Dorsolateral prefrontal cortex (tissue), 120 donors: ENCODE measurements at regions of chr17 and their contacts with region 1.

Region 1: DNA sequence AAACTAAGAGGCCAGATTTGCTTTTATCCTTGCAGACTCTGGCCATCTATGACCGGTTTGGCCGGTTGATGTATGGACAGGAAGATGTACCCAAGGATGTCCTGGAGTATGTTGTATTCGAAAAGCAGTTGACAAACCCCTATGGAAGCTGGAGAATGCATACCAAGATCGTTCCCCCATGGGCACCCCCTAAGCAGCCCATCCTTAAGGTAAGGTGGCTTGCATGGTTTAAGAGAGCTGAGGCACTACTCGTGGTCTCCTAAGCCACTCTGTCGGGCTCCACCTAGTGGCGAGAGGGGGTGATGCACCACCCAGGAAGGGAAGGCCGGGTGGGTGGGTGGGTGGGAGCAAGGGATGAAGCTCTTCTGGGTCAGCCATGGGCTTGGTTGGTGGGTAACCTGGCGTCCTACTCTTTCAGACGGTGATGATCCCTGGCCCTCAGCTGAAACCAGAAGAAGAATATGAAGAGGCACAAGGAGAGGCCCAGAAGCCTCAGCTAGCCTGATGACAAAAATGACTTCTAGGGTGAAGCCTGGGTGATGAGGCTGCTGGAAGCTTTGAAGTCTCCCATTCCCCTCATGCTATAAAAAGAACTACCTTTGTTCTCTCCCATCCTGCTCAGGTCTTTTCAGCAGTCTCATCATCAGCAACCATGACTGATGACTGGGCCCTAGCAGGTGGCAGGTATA is 21.5 kb downstream of the GPR179 start:
- DNase-seq: peak in 8 of 10 donors; percentile 50 to 75 (median 66)
- H3K4me3 ChIP-seq: no peak overlapping the region
- H3K27ac ChIP-seq: peak overlapping the region in 1 of 59 donors; percentile 36
- H3K27me3 ChIP-seq: no peaks in the 10 kb centered on the region
- CTCF ChIP-seq: peak; percentile 50 to 92 (median 81)

Region 2: DNA sequence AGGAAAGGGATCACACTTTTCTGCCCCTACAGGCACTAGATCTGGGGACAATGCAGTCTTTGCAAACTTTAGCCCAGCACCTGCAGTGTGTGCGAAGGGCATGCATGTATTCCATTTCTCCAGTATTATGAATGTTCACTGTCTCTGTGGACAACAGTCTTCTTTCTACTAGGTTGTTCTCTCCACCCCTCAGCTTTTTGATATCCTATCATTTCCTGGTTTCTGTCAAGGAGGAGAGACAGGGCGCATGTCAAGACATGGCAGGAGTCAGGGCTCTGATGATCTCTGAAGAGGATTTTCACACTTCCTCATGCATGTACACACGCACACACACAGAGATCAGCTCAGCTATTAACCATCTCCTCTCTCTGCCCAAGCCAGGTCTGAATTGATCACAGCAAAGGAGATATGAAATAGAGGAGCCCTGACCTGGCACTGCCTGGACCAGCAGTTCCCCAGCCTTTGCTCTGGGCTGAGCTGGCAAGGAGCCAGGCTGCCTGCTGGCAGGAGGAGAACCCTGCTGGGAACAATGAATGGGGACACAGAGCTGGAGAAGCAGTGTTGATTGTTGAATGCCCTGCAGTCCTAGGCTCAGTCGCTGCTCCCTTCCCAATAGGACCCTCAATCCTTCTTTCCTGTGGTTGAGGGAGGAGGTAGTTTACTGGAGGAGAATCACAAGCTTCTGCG is 18.9 kb after region 1 on chr17:
- intact Hi-C with region 1: loop called in 1 of 2 experiments (anchors 2 kb)
- DNase-seq: peak; percentile 63 to 88 (median 84)
- H3K4me3 ChIP-seq: peak overlapping the region in 31 of 59 donors; percentile 5 to 40 (median 19)
- H3K27ac ChIP-seq: peak overlapping the region in 58 of 59 donors; percentile 31 to 97 (median 86)
- H3K27me3 ChIP-seq: no peaks in the 10 kb centered on the region
- CTCF ChIP-seq: peak in 19 of 56 donors; percentile 4 to 39 (median 24)